Breast epithelium (tissue), 4 donors: ENCODE measurements at regions of chrX and their contacts with region 1.

Region 1: DNA sequence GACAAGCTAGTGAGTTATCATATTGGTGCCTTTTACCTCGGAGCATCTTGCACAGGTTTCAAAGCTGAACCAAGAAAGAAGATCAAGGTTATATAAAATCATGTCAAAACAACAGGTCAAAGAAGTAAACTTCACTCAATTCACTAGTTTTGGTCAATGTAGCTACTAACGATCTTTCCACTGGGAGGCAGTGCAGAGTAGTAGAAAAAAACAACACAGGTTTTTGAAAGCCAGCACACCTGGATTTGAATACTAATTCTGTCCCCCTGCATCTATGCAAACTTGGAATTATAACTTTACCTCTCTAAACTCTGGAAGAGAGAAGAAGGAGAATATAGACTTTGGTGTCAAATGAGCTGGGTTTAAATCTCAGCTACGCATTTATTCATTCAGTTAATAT is 266.1 kb downstream of the GRIA3 start:
- DNase-seq: no peak
- H3K4me3 ChIP-seq: no peak overlapping the region
- H3K27ac ChIP-seq: no peak overlapping the region
- H3K4me1 ChIP-seq: no peaks in the 10 kb centered on the region
- H3K27me3 ChIP-seq: no peaks in the 10 kb centered on the region
- CTCF ChIP-seq: no peak
- POLR2A ChIP-seq: no peak

Region 2: GRCh38 chrX:123432361-123433150 is 17.7 kb before region 1 on chrX:
- intact Hi-C with region 1: no loop called
- DNase-seq: peak in 1 of 2 donors; percentile 17
- H3K4me3 ChIP-seq: no peak overlapping the region
- H3K27ac ChIP-seq: peak overlapping the region in 1 of 2 donors; percentile 11
- H3K4me1 ChIP-seq: no peaks in the 10 kb centered on the region
- H3K27me3 ChIP-seq: no peaks in the 10 kb centered on the region
- CTCF ChIP-seq: no peak
- POLR2A ChIP-seq: no peak

Region 3: DNA sequence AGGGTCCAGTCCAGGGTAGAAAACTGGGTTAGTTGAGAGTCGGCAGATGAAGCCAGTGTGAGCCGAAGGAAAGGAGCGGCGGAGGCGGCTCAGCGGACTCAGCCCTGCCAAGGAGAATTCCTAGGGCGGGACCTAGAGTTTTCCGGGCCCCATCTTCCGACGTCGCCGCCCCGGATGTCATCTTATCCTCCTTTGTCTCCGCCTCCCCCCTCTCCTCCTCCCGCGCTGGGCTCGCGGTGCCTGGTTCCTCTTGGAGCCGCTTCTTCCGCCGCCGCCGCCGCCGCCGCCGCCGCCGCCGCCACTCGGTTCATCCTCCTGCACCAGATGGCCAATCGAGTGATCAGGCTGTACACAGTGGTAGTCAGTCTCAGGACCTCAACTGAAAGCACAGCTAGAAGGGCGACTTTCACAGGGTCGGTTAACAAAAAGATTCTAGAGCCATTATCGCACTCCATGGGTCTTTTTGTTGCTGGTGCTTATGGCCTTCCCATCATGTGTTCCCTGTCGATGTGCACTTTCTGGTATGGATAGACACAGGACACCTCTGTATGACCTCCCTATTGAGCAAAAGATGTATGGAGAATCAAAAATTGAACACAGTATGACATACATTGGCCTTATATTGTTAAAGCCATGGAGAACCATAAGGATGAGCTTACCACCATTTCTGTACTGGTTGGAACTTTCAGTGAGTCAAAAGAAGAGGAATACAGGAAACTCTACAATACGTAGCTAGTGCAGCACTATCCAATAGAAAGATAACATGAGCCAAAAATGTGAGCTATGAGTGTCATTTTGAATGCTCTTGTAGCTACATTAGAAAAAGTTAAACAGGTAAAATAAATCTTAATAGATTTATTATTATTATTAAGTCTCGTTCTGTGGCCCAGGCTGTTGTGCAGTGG is 315.0 kb after region 1 on chrX:
- intact Hi-C with region 1: loop called (anchors 5 kb)
- DNase-seq: peak; percentile 77 to 78
- H3K4me3 ChIP-seq: peak overlapping the region; percentile 23 to 56 (median 40)
- H3K27ac ChIP-seq: peak overlapping the region; percentile 20 to 73
- H3K4me1 ChIP-seq: no peaks in the 10 kb centered on the region
- H3K27me3 ChIP-seq: no peaks in the 10 kb centered on the region
- CTCF ChIP-seq: no peak
- POLR2A ChIP-seq: no peak